ENCODE measurements at regions of chr16 and their contacts with region 1.

Region 1: GRCh38 chr16:695355-696089 is 5.3 kb upstream of the WDR24 start:
- DNase-seq: peak; percentile 73 to 81 (median 76)
- H3K4me3 ChIP-seq: peak overlapping the region; percentile 58 to 78
- H3K4me3 Mint-ChIP-seq: peak overlapping the region; percentile 78 to 89 (median 84)
- H3K27ac ChIP-seq: no peak overlapping the region
- H3K27ac Mint-ChIP-seq: peak overlapping the region; percentile 61 to 87 (median 82)
- H3K4me1 ChIP-seq: peaks cover 42% of the 10 kb centered on the region
- H3K4me1 Mint-ChIP-seq: peaks cover 15 to 58% (median 26%) of the 10 kb centered on the region in 4 donors
- H3K27me3 ChIP-seq: no peaks in the 10 kb centered on the region
- H3K27me3 Mint-ChIP-seq: no peaks in the 10 kb centered on the region

Region 2: DNA sequence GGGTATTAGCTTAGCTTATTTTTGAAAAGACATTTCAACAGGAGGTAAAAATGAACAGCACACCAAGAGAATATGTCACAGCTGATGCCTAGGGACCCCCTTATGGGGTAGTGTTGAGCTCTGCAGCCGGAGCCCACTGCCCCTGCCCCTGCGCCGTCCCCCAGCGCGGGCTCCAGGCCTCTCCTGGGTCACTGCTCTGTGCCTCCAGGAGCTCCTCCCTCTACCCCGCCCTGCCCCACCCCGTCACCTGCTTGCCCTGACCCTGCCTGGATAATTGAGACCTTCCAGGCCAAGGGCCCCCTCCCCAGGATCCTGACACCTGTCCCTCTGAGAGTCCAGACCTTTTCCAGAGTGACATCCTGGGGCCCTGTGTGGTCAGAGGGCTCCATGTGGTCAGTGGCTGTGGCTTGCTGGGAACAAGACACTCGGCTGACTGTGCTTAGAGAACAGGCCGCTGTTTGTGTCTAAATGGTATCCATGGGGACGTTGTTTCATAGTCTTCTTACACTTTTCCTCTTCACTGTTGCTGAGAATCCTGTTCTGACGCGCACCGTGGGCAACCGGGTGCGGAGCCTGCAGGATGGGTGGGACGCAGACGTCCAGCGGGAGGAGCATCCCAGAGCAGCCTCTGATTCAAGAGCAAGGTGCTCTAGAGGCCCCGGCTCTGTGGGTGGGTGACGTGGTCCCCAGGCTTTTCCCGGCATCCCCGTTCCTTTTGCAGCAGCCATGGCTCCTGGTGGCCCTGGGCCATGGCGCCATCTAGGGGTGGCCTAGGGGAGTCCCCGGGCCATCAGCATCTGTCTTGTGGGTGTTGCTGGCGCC is 84.8 kb before region 1 on chr16:
- CTCF ChIA-PET with region 1: no interaction called
- POLR2A ChIA-PET with region 1: no interaction called
- intact Hi-C with region 1: no loop called
- DNase-seq: peak; percentile 44 to 57 (median 51)
- H3K4me3 ChIP-seq: no peak overlapping the region
- H3K4me3 Mint-ChIP-seq: no peak overlapping the region
- H3K27ac ChIP-seq: no peak overlapping the region
- H3K27ac Mint-ChIP-seq: peak overlapping the region in 3 of 7 donors; percentile 8 to 22 (median 19)
- H3K4me1 ChIP-seq: no peaks in the 10 kb centered on the region
- H3K4me1 Mint-ChIP-seq: peaks cover 3 to 17% (median 9%) of the 10 kb centered on the region in 4 donors
- H3K27me3 ChIP-seq: no peaks in the 10 kb centered on the region
- H3K27me3 Mint-ChIP-seq: no peaks in the 10 kb centered on the region

Region 3: GRCh38 chr16:648781-649589 is 46.5 kb before region 1 on chr16 and contains the start of gene WDR90:
- CTCF ChIA-PET with region 1: no interaction called
- POLR2A ChIA-PET with region 1: interaction called, 14 read pairs
- intact Hi-C with region 1: no loop called
- DNase-seq: peak; percentile 88 to 93 (median 90)
- H3K4me3 ChIP-seq: peak within 1 kb of the TSS; percentile 3 to 53
- H3K4me3 Mint-ChIP-seq: peak within 1 kb of the TSS; percentile 60 to 82 (median 76)
- H3K27ac ChIP-seq: peak within 1 kb of the TSS; percentile 79
- H3K27ac Mint-ChIP-seq: peak within 1 kb of the TSS; percentile 68 to 92 (median 87)
- H3K4me1 ChIP-seq: peaks cover 14% of the 10 kb centered on the region
- H3K4me1 Mint-ChIP-seq: peaks cover 0 to 30% (median 8%) of the 10 kb centered on the region in 4 donors
- H3K27me3 ChIP-seq: no peaks in the 10 kb centered on the region
- H3K27me3 Mint-ChIP-seq: no peaks in the 10 kb centered on the region
- total RNA-seq, gene WDR90: 18.0 to 19.7 TPM

Region 4: DNA sequence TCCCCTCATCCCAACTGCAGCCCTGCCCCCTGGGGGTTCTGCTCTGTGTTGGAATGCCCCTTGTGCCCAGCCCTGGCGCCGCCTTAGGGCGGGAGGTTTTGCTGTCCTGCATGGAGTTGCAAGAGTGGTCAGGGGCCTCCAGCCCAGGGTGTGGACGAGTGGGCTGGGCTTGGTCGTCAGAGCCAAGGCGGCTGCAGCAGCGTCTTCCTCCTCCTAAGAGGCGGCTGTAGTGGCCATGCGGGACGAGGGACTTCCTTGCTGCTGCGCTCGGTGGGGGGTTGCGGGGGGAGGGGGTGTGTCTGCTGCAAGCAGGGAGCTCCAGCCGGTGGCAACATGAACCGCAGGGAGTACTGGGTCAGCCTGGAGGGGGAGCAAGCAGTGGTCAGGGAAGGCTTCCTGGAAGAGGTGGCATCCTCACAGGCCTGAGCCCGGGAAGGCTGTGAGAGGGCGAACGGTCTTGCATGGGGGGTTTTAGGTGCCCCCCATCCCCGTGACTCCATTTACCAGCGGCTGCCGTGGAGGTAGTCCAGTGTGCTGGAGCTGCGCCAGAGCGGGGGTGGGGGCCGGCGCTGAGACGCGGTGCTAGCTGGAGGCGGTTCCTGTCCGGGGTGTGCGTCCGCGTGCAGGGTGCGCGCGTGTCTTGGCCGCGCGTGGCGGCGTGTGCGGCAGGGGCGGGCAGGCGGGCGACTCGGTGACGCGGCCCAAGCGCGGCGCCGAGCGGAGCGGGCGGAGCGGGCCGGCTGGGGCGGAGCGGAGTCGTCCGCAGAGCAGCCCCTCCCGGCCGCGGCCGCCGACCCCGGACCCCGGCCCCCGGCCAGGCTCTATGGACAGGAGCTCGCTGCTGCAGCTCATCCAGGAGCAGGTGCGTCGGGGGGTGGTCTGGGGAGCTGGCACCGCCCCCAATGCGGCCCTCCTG is 20.3 kb before region 1 on chr16 and contains the start of gene RHBDL1:
- CTCF ChIA-PET with region 1: no interaction called
- POLR2A ChIA-PET with region 1: interaction called, 212 read pairs
- intact Hi-C with region 1: no loop called
- DNase-seq: no peak
- H3K4me3 ChIP-seq: peak within 1 kb of the TSS in 1 of 2 donors; percentile 24
- H3K4me3 Mint-ChIP-seq: peak within 1 kb of the TSS in 5 of 8 donors; percentile 29 to 72 (median 48)
- H3K27ac ChIP-seq: no peak within 1 kb of the TSS
- H3K27ac Mint-ChIP-seq: peak within 1 kb of the TSS in 2 of 7 donors; percentile 42 to 88
- H3K4me1 ChIP-seq: peaks cover 19% of the 10 kb centered on the region
- H3K4me1 Mint-ChIP-seq: peaks cover 5 to 30% (median 18%) of the 10 kb centered on the region in 4 donors
- H3K27me3 ChIP-seq: no peaks in the 10 kb centered on the region
- H3K27me3 Mint-ChIP-seq: no peaks in the 10 kb centered on the region
- total RNA-seq, gene RHBDL1: 2.2 to 2.4 TPM

Region 5: GRCh38 chr16:714558-715476 is 19.3 kb after region 1 on chr16 and contains the start of gene METRN:
- CTCF ChIA-PET with region 1: interaction called, 6 read pairs
- POLR2A ChIA-PET with region 1: interaction called, 166 read pairs
- intact Hi-C with region 1: no loop called
- DNase-seq: peak; percentile 81 to 85 (median 84)
- H3K4me3 ChIP-seq: peak within 1 kb of the TSS in 1 of 2 donors; percentile 43
- H3K4me3 Mint-ChIP-seq: peak within 1 kb of the TSS; percentile 39 to 73 (median 56)
- H3K27ac ChIP-seq: no peak within 1 kb of the TSS
- H3K27ac Mint-ChIP-seq: peak within 1 kb of the TSS in 2 of 7 donors; percentile 35 to 44
- H3K4me1 ChIP-seq: peaks cover 21% of the 10 kb centered on the region
- H3K4me1 Mint-ChIP-seq: peaks cover 0 to 22% (median 9%) of the 10 kb centered on the region in 4 donors
- H3K27me3 ChIP-seq: peaks cover 10% of the 10 kb centered on the region
- H3K27me3 Mint-ChIP-seq: peaks cover 0 to 8% of the 10 kb centered on the region in 2 donors
- total RNA-seq, gene METRN: 6.9 to 7.7 TPM

Region 6: DNA sequence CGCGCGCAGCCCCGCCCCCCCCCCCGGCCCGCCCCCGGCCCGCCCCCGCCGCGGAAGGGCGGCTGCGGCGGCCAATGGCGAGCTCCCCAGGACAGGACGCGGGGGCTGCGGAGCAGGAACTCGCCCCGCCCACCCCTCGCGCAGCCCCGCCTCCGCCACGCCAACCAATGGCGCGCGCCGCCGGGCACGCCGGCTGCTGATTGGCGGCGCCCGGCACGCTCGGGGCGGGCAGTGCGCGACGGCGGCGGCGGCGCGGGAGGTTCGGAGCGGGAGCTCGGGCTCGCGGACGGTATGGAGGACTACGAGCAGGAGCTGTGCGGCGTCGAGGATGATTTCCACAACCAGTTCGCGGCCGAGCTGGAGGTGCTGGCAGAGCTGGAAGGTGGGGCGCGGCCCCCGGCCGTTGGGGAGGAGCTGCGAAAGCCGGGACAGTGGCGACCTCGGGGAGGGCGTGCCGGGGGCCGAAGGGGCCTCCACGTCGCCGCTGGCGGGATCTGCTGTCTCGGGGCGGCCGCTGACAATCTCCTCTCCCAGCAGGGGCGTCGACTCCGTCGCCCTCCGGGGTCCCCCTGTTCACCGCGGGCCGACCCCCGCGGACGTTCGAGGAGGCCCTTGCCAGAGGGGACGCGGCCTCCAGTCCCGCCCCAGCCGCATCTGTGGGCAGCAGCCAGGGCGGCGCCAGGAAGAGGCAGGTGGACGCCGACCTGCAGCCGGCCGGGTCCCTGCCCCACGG is 93.0 kb after region 1 on chr16 and contains the start of gene CHTF18:
- CTCF ChIA-PET with region 1: interaction called, 8 read pairs
- POLR2A ChIA-PET with region 1: interaction called, 11 read pairs
- intact Hi-C with region 1: no loop called
- DNase-seq: peak; percentile 90 to 96 (median 95)
- H3K4me3 ChIP-seq: peak within 1 kb of the TSS; percentile 17 to 83
- H3K4me3 Mint-ChIP-seq: peak within 1 kb of the TSS; percentile 82 to 91 (median 85)
- H3K27ac ChIP-seq: peak within 1 kb of the TSS; percentile 73
- H3K27ac Mint-ChIP-seq: peak within 1 kb of the TSS in 6 of 7 donors; percentile 41 to 80 (median 67)
- H3K4me1 ChIP-seq: peaks cover 21% of the 10 kb centered on the region
- H3K4me1 Mint-ChIP-seq: peaks cover 2 to 30% (median 8%) of the 10 kb centered on the region in 4 donors
- H3K27me3 ChIP-seq: no peaks in the 10 kb centered on the region
- H3K27me3 Mint-ChIP-seq: no peaks in the 10 kb centered on the region
- total RNA-seq, gene CHTF18: 42.1 to 46.9 TPM

Measured in CD4-positive, alpha-beta memory T cell (primary cell).